ENCODE measurements at regions of chr1 and their contacts with region 1.

Region 1: DNA sequence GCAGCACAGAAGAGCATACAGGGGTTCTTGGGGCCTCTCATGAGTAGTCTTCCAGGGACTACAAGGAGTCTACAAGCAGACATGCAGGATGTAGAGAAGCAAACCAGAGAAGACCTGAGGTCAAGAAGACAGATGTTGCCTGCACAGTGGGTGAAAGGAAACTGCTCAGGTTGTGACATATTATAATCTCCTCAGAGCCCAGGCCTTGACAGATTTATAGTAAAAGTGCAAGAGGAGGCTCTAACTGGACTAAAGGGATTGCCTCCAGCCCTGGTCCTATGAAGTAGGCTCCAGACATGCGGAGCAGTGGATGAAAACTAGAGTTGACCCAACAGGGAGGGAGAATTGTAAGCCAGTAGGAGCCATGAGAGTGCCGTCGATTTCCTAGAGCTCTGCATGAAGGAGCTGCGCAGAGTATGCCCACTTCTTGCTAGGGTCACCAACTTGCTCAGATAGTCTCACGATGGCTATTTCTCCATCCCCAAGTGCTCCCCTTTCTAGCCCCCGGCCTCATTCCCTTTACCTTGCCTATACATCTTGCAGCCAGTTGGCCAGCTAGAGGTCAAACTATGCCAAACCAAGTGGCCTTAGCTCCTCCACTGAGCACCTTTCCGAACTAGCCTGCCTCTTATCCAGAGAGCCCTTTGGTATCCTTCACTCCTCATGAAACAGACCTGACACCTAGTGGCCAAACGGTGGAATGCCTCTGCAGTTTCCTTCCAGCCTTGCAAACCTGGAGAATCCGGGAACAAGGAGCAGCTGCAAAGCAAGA is 36.2 kb upstream of the IPO9 start:
- DNase-seq: peak; percentile 79
- ATAC-seq: peak; percentile 81

Region 2: GRCh38 chr1:201530741-201531531 is 261.8 kb before region 1 on chr1:
- intact Hi-C with region 1: loop called (anchors 5 kb)
- DNase-seq: peak; percentile 91
- ATAC-seq: peak; percentile 91

Region 3: GRCh38 chr1:201559679-201560162 is 233.0 kb before region 1 on chr1:
- intact Hi-C with region 1: loop called (anchors 2 kb)
- DNase-seq: peak; percentile 89
- ATAC-seq: peak; percentile 93

Region 4: DNA sequence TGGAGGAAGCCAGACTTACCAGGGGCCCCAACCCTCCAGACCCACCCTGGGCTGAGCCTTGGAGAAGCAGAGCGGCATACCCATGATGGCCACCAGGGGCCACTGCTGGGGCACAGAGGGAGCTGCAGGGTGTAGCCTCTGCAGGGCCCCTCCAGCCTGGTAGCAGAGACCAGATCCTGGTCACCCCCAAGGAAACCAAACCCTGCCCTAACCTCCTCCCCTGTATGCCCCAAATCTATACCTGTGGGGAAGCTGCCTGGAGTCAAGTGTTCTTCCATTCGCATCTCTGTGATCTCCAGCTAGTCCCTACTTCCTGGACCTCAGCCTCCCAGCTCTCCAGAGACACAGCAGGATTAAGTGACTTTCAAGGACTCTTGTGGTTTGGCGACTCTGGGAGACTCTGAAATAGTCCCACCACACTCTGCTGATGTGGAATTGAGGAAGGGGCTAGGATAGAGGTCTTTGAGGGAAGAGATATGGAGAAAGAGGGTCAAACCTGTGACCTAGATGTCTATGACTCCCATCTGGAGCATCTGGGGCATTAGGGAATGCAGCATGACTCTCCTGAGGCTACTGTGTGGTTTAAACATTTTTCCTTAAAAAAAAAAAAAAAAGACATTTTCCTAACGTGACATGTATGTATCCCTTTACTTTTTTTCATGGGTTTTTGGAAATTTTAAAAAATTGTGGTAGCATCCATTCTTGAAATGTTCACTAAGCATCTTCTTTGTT is 83.0 kb before region 1 on chr1:
- intact Hi-C with region 1: loop called (anchors 2 kb)
- DNase-seq: peak; percentile 87
- ATAC-seq: peak; percentile 68